ENCODE measurements at regions of chr2 and their contacts with region 1.

Region 1: GRCh38 chr2:28588292-28588670 is 92.4 kb downstream of the PLB1 start:
- DNase-seq: no peak

Region 2: DNA sequence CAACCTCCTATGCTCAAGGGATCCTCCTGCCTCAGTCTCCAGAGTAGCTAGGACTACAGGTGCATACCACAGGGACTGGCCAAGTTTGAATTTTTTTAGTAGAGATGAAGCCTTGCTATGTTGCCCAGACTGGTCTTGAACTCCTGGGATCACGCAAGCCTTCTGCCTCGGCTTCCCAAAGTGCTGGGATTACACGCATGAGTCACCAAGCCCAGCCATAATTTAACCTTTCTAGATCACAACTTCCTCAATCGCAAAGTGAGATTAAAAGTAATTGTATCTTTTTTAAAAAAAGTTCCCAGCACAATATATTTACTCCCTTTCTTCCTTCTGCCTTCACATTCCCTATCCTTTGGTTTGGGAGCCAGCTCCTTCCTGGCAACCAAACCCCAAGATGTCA is 157.6 kb after region 1 on chr2:
- intact Hi-C with region 1: loop called (anchors 2 to 5 kb)
- DNase-seq: no peak

Region 3: GRCh38 chr2:30436859-30437435 is 1848.7 kb after region 1 on chr2:
- intact Hi-C with region 1: no loop called
- DNase-seq: no peak